ENCODE measurements at regions of chr14 and their contacts with region 1.

Region 1: GRCh38 chr14:50003213-50004031 is 110.5 kb downstream of the ARF6 start:
- DNase-seq: peak; percentile 80 to 88
- ATAC-seq: peak; percentile 33 to 63 (median 54)
- H3K4me3 ChIP-seq: peak overlapping the region; percentile 48
- H3K4me3 Mint-ChIP-seq: peak overlapping the region; percentile 99
- H3K27ac ChIP-seq: peak overlapping the region; percentile 95
- H3K27ac Mint-ChIP-seq: peak overlapping the region; percentile 100
- H3K4me1 ChIP-seq: peaks cover 59% of the 10 kb centered on the region
- H3K4me1 Mint-ChIP-seq: peaks cover 51 to 57% of the 10 kb centered on the region in 2 donors
- H3K27me3 ChIP-seq: no peaks in the 10 kb centered on the region
- H3K27me3 Mint-ChIP-seq: no peaks in the 10 kb centered on the region
- CTCF ChIP-seq: no peak

Region 2: DNA sequence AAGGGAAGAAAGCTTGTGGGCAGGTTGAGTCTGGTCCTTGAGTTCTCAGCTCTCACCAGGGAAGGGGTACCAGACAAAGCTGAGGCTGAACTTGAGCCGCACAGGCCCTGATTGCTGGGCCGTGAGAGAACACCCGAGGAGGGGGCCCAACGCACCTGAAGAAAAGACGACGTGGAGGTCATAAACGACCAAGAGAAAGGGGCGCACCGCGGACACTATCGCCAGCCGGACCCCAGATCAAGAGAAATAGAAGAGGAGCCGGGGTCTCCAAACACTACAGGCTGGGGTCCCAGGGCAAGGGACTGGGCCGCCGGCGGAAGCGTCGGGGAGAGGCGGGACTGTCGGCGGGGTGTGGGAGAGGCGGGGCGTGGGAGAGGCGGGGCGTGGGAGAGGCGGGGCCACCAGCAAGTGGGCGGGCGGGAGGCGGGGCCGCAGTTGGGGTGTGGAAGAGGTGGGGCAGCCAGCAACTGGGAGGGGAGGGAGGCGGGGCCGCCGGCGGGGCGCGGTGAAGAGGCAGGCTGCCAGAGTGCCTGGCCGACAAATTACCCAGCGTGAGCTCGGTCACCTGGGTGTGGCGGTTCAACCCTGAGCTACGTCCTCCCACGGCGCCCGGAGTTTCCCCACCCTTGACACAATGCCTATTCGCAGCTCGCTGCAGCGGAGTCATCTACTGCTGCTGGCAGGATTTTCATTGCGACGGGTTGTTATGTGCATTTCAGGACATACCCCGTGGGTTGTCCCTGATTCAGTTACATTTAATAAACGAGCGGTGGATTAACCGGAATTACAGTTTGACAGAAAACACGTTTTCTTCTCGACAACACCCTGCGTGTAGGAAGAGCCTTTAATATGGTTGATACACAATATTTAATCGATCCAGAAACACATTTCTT is 135.3 kb before region 1 on chr14:
- intact Hi-C with region 1: loop called (anchors 1 kb)
- DNase-seq: peak; percentile 94 to 98
- ATAC-seq: peak; percentile 86 to 97 (median 92)
- H3K4me3 ChIP-seq: peak overlapping the region; percentile 48
- H3K4me3 Mint-ChIP-seq: peak overlapping the region; percentile 92
- H3K27ac ChIP-seq: peak overlapping the region; percentile 93
- H3K27ac Mint-ChIP-seq: peak overlapping the region; percentile 94 to 100
- H3K4me1 ChIP-seq: peaks cover 33% of the 10 kb centered on the region
- H3K4me1 Mint-ChIP-seq: peaks cover 15 to 18% of the 10 kb centered on the region in 2 donors
- H3K27me3 ChIP-seq: no peaks in the 10 kb centered on the region
- H3K27me3 Mint-ChIP-seq: no peaks in the 10 kb centered on the region
- CTCF ChIP-seq: no peak

Region 3: DNA sequence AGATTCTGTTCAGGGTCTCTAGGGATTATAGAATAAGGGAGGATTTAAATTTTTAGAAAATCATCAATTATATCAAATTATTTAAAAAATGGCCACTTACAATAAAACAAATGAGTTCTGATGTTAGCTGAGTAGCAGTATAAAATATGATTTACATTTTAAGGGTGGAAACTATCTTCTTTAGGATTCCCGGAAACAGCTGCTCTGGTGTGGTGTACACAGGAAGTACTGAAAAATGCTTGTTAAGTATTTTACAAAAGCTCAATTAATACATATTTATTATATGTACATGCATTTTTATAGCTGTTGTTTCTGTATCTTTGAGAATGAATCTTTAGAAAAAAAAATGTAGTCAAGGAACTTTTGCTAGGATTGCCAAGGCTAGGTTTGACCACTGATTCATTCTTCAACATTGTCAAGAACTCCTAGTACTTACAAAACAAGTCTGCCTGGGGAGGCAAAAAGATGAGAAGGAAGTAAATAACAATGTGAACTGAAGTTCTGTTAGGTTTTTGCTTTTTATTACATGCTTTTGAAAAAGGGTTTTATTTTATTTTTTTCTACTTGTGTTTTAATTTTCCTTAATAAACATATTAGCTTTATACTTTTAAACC is 62.5 kb before region 1 on chr14:
- intact Hi-C with region 1: loop called (anchors 1 kb)
- DNase-seq: peak in 1 of 2 donors; percentile 55
- ATAC-seq: peak; percentile 64 to 77 (median 72)
- H3K4me3 ChIP-seq: no peak overlapping the region
- H3K4me3 Mint-ChIP-seq: peak overlapping the region; percentile 68
- H3K27ac ChIP-seq: peak overlapping the region; percentile 66
- H3K27ac Mint-ChIP-seq: peak overlapping the region; percentile 87 to 88
- H3K4me1 ChIP-seq: peaks cover 25% of the 10 kb centered on the region
- H3K4me1 Mint-ChIP-seq: peaks cover 55 to 56% of the 10 kb centered on the region in 2 donors
- H3K27me3 ChIP-seq: no peaks in the 10 kb centered on the region
- H3K27me3 Mint-ChIP-seq: no peaks in the 10 kb centered on the region
- CTCF ChIP-seq: no peak

Region 4: GRCh38 chr14:50045039-50045711 is 41.8 kb after region 1 on chr14:
- intact Hi-C with region 1: loop called (anchors 1 kb)
- DNase-seq: peak; percentile 65 to 80
- ATAC-seq: peak; percentile 83 to 89 (median 88)
- H3K4me3 ChIP-seq: no peak overlapping the region
- H3K4me3 Mint-ChIP-seq: peak overlapping the region; percentile 63
- H3K27ac ChIP-seq: peak overlapping the region; percentile 89
- H3K27ac Mint-ChIP-seq: peak overlapping the region; percentile 96 to 99
- H3K4me1 ChIP-seq: peaks cover 75% of the 10 kb centered on the region
- H3K4me1 Mint-ChIP-seq: peaks cover 62 to 66% of the 10 kb centered on the region in 2 donors
- H3K27me3 ChIP-seq: no peaks in the 10 kb centered on the region
- H3K27me3 Mint-ChIP-seq: no peaks in the 10 kb centered on the region
- CTCF ChIP-seq: no peak

Region 5: DNA sequence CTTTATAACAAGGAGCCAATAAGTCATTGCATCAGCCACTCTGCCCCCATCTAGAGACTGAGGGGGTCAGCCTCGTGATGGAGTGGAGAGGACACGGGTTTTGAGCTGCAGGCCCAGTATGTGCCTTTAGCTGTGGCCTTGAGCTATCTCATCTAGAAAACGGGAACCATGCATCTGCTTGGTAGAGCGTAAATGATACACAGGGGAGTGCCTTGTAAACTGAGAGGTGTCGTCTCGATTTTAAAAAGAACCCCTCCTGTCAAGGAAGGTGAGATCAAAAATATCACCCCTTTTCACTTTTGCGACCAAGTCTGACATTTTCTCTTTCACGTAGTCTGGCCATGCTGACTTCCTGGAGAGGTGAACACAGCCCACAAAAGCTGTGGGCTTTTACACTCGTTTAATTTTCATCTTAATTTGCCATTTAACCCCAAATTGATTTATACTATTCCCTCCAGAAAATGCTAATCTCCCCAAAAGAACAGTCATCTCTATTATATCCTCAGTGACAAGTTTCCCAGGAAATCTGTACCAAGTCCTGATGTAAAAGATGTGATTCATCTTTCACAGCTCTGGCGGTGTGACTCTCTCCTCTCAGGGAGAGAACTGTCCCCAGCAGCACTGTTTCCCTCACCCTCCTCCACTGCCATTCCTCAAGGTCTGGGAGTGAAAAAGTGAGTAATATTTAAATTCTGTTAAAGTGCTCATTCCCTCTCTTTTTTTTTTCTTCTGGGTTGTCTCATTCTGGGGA is 82.3 kb after region 1 on chr14:
- intact Hi-C with region 1: loop called (anchors 1 kb)
- DNase-seq: peak; percentile 36 to 70
- ATAC-seq: peak; percentile 53 to 66 (median 56)
- H3K4me3 ChIP-seq: no peak overlapping the region
- H3K4me3 Mint-ChIP-seq: peak overlapping the region; percentile 14
- H3K27ac ChIP-seq: peak overlapping the region; percentile 95
- H3K27ac Mint-ChIP-seq: peak overlapping the region; percentile 86 to 87
- H3K4me1 ChIP-seq: peaks cover 72% of the 10 kb centered on the region
- H3K4me1 Mint-ChIP-seq: peaks cover 62 to 66% of the 10 kb centered on the region in 2 donors
- H3K27me3 ChIP-seq: no peaks in the 10 kb centered on the region
- H3K27me3 Mint-ChIP-seq: no peaks in the 10 kb centered on the region
- CTCF ChIP-seq: no peak

Region 6: GRCh38 chr14:50311975-50312733 is 308.7 kb after region 1 on chr14 and contains the starts of genes DMAC2L and L2HGDH:
- intact Hi-C with region 1: loop called (anchors 5 kb)
- DNase-seq: peak; percentile 89 to 94
- ATAC-seq: peak; percentile 90 to 98 (median 90)
- H3K4me3 ChIP-seq: peak within 1 kb of the TSS; percentile 84
- H3K4me3 Mint-ChIP-seq: peak within 1 kb of the TSS; percentile 94
- H3K27ac ChIP-seq: peak within 1 kb of the TSS; percentile 89
- H3K27ac Mint-ChIP-seq: peak within 1 kb of the TSS; percentile 94 to 95
- H3K4me1 ChIP-seq: peaks cover 18% of the 10 kb centered on the region
- H3K4me1 Mint-ChIP-seq: peaks cover 27 to 46% of the 10 kb centered on the region in 2 donors
- H3K27me3 ChIP-seq: no peaks in the 10 kb centered on the region
- H3K27me3 Mint-ChIP-seq: no peaks in the 10 kb centered on the region
- CTCF ChIP-seq: no peak
- total RNA-seq, gene DMAC2L: 24.7 to 28.7 (median 25.0) TPM
- total RNA-seq, gene L2HGDH: 4.2 to 5.6 (median 5.4) TPM